ENCODE measurements at regions of chr4 and their contacts with region 1.

Region 1: DNA sequence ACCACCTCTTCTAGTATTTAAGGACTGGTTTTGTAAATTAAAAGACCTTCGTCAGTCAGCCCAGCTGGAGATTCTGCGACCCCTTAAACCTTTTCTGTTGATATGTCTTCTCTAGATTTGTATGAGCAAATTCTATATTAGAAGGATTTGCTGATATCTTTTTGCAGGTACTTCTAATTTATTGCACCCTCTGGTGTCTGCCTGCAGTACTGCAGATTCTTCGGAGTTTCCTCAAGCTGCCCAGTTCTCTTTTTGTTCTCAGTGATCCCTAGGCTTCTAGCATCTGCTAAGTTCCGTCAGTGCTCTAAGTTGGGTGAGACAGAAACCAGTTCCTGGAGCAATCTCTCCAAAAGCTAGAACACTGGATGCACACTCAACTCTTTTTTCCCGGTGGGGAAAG is 545.2 kb downstream of the C4orf33 start:
- DNase-seq: peak; percentile 35
- ATAC-seq: no peak
- H3K4me3 ChIP-seq: no peak overlapping the region
- H3K27ac ChIP-seq: no peak overlapping the region
- H3K4me1 ChIP-seq: no peaks in the 10 kb centered on the region
- H3K27me3 ChIP-seq: no peaks in the 10 kb centered on the region
- CTCF ChIP-seq: peak; percentile 60

Region 2: DNA sequence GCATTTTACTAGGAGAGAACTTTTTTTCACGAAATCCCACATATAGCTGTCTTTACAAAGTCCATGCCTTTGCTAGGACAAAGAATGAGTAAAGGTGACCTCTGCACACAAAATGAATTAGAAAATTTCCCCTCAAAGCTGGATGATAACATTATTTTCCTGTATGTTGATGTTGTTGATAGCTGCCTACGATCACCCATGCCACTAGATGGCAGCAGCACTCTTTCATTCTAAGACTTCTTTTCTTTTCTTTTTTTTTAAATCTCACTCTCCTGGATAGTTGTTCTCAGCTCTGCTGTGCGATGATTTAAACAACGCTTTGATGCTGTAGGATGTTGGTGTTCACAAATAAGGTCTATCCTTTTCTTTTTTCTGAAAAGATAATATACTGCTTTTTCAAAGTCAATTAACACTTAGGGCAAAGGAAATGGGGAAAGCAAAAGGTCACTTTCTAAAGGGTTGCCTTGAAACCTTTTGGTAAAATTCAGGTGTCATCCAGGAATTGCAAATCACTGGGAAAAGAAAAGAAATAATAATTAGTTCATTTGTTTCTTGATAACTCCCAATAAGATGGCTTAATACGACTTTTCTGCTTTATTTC is 278.4 kb before region 1 on chr4:
- CTCF ChIA-PET with region 1: no interaction called
- POLR2A ChIA-PET with region 1: no interaction called
- in situ Hi-C with region 1: no loop called
- intact Hi-C with region 1: loop called (anchors 5 kb)
- DNase-seq: peak; percentile 25
- ATAC-seq: no peak; the same call in 1 of the 2 replicates
- H3K4me3 ChIP-seq: no peak overlapping the region
- H3K27ac ChIP-seq: no peak overlapping the region
- H3K4me1 ChIP-seq: no peaks in the 10 kb centered on the region
- H3K27me3 ChIP-seq: no peaks in the 10 kb centered on the region
- CTCF ChIP-seq: peak; percentile 63; the same call in 1 of the 2 replicates

Region 3: DNA sequence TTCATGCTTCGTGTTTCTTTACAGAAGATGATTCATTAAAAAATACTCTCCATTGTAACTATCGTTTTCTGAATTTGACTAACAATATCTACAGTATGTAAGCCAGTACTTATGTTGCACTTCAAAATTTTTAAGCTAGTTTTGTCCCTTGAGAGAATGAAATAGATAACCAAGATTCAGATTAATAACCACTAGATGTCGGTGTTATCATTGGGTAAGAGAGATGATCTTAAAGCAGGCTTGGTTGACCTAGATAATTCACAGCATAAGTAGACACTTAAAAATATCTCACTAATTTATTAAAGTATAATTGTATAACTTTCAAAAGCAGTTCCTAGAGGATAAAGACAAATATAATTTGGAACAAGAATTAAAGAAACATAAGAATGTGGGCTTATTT is 114.4 kb before region 1 on chr4:
- CTCF ChIA-PET with region 1: no interaction called
- POLR2A ChIA-PET with region 1: no interaction called
- in situ Hi-C with region 1: no loop called
- intact Hi-C with region 1: loop called (anchors 5 kb)
- DNase-seq: no peak
- ATAC-seq: no peak
- H3K4me3 ChIP-seq: no peak overlapping the region
- H3K27ac ChIP-seq: no peak overlapping the region
- H3K4me1 ChIP-seq: no peaks in the 10 kb centered on the region
- H3K27me3 ChIP-seq: no peaks in the 10 kb centered on the region
- CTCF ChIP-seq: peak; percentile 31; the same call in 1 of the 2 replicates

Region 4: DNA sequence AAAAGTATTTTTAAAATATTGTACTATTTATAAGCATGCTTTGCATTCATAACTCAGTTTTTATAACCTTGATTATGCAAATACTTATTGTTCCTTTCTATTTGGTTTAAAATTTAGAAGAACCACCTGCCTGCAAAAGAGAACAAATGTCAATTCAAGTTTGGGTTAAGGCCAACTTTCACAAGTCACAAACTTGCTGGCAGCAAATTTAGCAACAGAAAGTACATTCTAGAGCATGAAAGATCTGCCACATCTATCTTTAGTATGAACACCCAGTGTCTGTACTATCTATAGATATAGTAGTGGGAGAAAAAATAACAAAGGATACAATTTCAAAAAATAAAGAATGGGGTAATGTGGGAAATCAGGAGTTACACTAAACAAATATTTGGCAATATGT is 469.0 kb after region 1 on chr4:
- CTCF ChIA-PET with region 1: no interaction called
- POLR2A ChIA-PET with region 1: no interaction called
- in situ Hi-C with region 1: no loop called
- intact Hi-C with region 1: no loop called
- DNase-seq: no peak
- ATAC-seq: no peak
- H3K4me3 ChIP-seq: no peak overlapping the region
- H3K27ac ChIP-seq: no peak overlapping the region
- H3K4me1 ChIP-seq: no peaks in the 10 kb centered on the region
- H3K27me3 ChIP-seq: no peaks in the 10 kb centered on the region
- CTCF ChIP-seq: no peak

Region 5: GRCh38 chr4:131026771-131027170 is 1385.6 kb after region 1 on chr4:
- CTCF ChIA-PET with region 1: no interaction called
- POLR2A ChIA-PET with region 1: no interaction called
- in situ Hi-C with region 1: no loop called
- intact Hi-C with region 1: no loop called
- DNase-seq: no peak
- ATAC-seq: no peak
- H3K4me3 ChIP-seq: no peak overlapping the region
- H3K27ac ChIP-seq: no peak overlapping the region
- H3K4me1 ChIP-seq: no peaks in the 10 kb centered on the region
- H3K27me3 ChIP-seq: no peaks in the 10 kb centered on the region
- CTCF ChIP-seq: no peak